ENCODE measurements at regions of chrX and their contacts with region 1.

Region 1: DNA sequence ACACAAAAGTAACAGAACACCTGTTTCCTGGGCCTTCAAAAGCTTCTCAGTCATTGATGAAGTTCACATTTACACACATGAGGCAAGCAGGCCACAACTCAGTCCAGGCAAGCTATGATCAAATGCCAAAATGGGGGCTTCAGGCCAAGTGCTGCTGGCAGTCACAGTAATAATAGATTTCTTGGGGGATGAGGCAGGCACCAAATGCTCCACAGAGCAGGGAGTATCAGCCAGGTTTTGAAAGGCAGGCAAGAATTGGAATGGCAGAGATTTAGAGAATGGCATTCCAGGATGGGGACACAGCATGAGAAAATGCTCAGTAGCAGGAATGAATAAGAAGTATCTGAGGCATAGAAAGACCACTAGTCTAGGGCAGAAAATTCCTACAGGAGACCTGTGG is 52.8 kb downstream of the GRIA3 start:
- DNase-seq: no peak
- H3K4me3 ChIP-seq: no peak overlapping the region
- H3K27ac ChIP-seq: no peak overlapping the region
- H3K4me1 ChIP-seq: no peaks in the 10 kb centered on the region
- H3K27me3 ChIP-seq: no peaks in the 10 kb centered on the region
- CTCF ChIP-seq: no peak
- EP300 ChIP-seq: no peak
- POLR2A ChIP-seq: no peak

Region 2: DNA sequence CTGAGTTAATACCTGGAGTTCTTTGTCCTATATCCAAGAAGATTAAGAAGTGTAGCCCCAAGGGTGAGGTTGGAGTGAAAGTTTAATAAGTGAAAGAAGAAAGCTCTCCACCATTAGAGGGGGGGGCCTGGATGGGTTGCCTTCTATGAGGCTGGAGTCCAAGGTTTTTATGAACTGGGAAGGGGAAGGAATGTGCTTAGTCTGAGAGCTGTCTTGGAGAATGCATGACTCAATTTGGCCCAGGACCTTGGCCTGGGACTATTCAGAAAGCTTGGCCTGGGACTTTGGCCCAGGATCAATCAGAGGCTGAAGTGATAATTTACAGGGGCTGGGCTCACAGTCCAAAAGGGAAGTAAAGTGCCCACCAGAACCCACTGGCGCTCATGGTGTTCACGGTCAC is 1101.8 kb before region 1 on chrX:
- intact Hi-C with region 1: no loop called
- DNase-seq: no peak
- H3K4me3 ChIP-seq: no peak overlapping the region
- H3K27ac ChIP-seq: no peak overlapping the region
- H3K4me1 ChIP-seq: no peaks in the 10 kb centered on the region
- H3K27me3 ChIP-seq: no peaks in the 10 kb centered on the region
- CTCF ChIP-seq: no peak
- EP300 ChIP-seq: no peak
- POLR2A ChIP-seq: no peak

Region 3: DNA sequence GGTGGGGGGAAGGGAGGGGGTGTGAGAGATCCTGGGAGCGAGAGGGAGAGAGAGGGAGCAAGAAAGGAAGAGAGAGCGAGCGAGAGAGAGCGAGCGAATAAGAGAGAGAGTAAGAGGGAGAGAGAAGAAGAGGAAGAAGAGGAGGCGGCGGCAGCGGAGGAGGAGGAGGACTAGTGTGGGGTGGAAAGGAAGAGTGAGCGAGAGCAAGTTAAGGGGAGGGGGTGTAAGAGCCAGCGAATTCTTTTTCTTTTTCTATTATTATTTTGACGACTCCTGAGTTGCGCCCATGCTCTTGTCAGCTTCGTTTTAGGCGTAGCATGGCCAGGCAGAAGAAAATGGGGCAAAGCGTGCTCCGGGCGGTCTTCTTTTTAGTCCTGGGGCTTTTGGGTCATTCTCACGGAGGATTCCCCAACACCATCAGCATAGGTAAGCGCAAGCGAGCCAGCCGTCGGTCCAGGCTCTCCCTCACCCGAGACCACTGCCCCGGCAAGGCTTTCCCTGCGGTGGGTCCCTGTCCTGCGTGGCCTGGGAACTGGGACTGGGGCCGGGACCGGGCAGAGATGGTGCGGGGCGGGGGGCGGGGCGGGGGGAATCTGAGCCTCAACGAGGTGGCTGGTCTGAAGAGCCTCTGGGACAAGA is 52.5 kb before region 1 on chrX and contains the start of gene GRIA3:
- intact Hi-C with region 1: loop called in 1 of 4 experiments (anchors 10 kb)
- DNase-seq: peak in 4 of 5 donors; percentile 14 to 34 (median 21)
- H3K4me3 ChIP-seq: peak within 1 kb of the TSS; percentile 31
- H3K27ac ChIP-seq: no peak within 1 kb of the TSS
- H3K4me1 ChIP-seq: no peaks in the 10 kb centered on the region
- H3K27me3 ChIP-seq: no peaks in the 10 kb centered on the region
- CTCF ChIP-seq: no peak
- EP300 ChIP-seq: no peak
- POLR2A ChIP-seq: no peak
- total RNA-seq, gene GRIA3: 2.0 to 11.2 (median 5.0) TPM

Region 4: DNA sequence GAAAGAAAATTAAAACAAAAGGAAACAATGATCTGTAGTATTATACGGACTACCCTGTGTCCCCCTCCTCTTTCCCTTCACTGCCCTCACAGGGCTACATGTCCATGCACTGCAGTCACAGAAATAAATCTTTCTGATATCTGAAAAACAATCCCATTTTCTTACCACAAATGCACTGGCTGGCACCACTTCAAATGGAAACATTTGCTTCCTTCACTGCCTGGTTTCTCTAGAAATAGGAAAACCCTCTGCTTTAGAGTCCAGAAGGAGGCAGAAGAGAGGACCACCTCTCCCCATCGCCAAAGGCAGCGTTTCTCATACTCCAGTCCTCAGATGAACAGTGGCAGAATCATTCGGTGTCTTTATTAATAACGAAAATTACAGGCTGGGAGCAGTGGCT is 45.4 kb after region 1 on chrX:
- intact Hi-C with region 1: no loop called
- DNase-seq: no peak
- H3K4me3 ChIP-seq: no peak overlapping the region
- H3K27ac ChIP-seq: no peak overlapping the region
- H3K4me1 ChIP-seq: no peaks in the 10 kb centered on the region
- H3K27me3 ChIP-seq: no peaks in the 10 kb centered on the region
- CTCF ChIP-seq: no peak
- EP300 ChIP-seq: no peak
- POLR2A ChIP-seq: no peak